Dorsolateral prefrontal cortex (tissue), 120 donors: ENCODE measurements at regions of chr9 and their contacts with region 1.

Region 1: GRCh38 chr9:123978981-123979380 is 32.6 kb upstream of the LHX2 start:
- DNase-seq: no peak
- H3K4me3 ChIP-seq: no peak overlapping the region
- H3K27ac ChIP-seq: no peak overlapping the region
- H3K27me3 ChIP-seq: peaks cover 0 to 17% (median 0%) of the 10 kb centered on the region in 45 donors
- CTCF ChIP-seq: no peak

Region 2: GRCh38 chr9:123997665-123998277 is 18.8 kb after region 1 on chr9:
- intact Hi-C with region 1: loop called in 1 of 2 experiments (anchors 2 kb)
- DNase-seq: no peak
- H3K4me3 ChIP-seq: no peak overlapping the region
- H3K27ac ChIP-seq: no peak overlapping the region
- H3K27me3 ChIP-seq: peaks cover 0 to 47% (median 16%) of the 10 kb centered on the region in 45 donors
- CTCF ChIP-seq: no peak